ENCODE measurements at regions of chr19 and their contacts with region 1.

Region 1: DNA sequence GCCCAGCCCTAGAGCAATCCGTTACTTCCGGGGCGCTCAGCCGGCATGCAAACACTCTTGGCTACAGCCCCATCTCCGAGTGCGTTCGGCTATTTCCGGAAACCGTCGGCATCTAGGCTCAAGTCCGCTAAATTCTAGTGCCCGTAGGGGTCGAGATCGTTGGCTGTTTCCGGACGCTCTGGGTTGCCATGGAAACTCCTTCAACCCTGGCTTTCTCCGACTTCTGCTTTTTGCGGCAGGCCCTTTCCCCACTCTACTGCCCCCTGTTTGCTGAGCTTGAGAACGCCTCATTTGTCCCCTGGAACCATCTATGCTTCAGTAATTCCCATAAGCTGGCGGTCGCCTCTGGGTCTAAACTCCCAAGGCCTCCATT is 533 bp upstream of the PIK3R2 start:
- DNase-seq: peak; percentile 100
- H3K4me3 ChIP-seq: peak overlapping the region; percentile 82
- H3K27ac ChIP-seq: peak overlapping the region; percentile 90
- H3K4me1 ChIP-seq: peaks cover 27% of the 10 kb centered on the region
- CTCF ChIP-seq: peak; percentile 88

Region 2: DNA sequence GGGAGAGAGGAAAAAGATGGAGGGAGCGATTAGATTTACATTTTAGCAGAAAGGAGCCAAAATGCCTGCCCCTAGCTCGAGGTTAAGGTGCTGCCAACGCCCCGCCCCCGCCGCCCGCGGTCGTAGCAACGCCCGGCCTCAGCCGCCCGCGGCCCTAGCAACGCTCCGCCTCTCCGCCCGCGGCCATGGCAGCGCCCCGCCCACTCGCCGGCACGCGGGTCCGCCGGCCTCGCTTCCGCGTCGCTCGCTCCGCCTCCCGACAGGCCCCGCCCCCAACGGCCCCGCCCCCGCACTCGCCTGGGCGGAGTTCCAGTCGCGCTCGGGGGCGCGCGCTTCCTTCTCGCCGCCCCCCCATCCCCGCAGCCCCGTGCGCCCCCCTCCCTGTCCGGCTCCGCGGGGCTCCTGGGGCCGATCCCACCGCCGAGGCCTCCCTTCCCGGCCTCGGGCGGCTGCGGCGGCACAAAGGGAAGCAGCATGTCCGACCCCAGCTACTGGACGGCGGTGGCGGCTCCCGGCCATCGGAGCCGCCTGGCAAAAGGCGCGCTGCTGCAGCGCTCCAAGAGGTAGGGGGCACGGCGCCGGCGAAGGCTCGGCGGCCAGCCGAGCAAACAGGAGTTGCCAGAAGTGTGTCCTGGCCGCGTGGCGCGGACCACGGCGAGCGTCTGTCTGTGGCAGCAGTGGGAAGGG is 34.6 kb before region 1 on chr19:
- CTCF ChIA-PET with region 1: interaction called, 4 read pairs
- POLR2A ChIA-PET with region 1: no interaction called
- intact Hi-C with region 1: loop called (anchors 2 kb)
- DNase-seq: peak; percentile 93
- H3K4me3 ChIP-seq: peak overlapping the region; percentile 73
- H3K27ac ChIP-seq: peak overlapping the region; percentile 70
- H3K4me1 ChIP-seq: peaks cover 35% of the 10 kb centered on the region
- CTCF ChIP-seq: no peak

Region 3: GRCh38 chr19:18191640-18192062 is 39.2 kb after region 1 on chr19:
- CTCF ChIA-PET with region 1: no interaction called
- POLR2A ChIA-PET with region 1: no interaction called
- intact Hi-C with region 1: no loop called
- DNase-seq: no peak
- H3K4me3 ChIP-seq: peak overlapping the region; percentile 69
- H3K27ac ChIP-seq: peak overlapping the region; percentile 92
- H3K4me1 ChIP-seq: peaks cover 35% of the 10 kb centered on the region
- CTCF ChIP-seq: no peak; the same call in 1 of the 2 replicates